B cell (primary cell): ENCODE measurements at regions of chr3 and their contacts with region 1.

Region 1: DNA sequence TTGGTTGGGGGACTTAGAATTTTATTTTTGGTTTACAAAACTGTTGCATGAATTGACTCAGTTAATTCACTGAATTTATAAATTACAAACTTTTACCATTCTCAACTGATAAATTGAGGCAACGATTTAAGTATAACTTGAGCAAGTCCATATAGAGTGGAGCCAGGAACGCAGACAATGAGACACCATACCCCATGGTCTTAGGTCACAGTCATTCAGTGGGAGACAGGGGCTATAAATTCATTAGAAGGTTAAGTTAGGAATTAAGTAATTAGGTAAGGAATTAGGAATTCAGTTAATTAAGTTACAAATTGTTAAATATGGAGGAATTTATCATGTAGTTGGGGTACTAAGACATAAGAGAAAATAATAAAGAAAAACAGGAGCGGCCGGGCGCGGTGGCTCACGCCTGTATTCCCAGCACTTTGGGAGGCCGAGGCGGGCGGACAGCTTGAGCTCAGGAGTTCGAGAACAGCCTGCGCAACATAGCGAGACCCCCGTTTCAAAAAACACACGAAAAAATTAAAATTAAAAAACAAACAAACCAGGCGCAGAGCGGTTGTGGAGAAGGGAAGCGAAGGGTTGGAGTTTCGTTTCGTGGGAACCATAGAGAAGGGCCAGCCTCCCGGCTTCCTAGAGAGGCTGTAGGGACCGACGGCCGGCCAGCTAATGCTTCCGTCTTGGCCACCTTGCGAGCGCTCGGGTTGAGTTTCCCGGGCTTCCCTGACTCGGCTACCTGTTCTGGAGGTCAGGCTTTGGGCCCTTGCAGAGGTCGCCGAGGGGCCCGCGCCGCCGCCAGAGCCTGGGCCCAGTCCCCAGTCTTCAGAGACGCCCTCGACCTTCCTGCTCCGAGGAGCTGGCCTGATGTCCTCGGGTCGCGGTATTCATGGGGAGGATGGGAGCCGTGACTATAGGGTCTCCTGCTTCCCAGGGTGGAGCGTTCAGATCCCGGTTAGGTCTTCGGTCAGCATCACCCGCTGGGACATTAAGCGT is at the start of gene ZNF619:
- DNase-seq: peak; percentile 84
- ATAC-seq: peak; percentile 93
- H3K4me3 ChIP-seq: peak within 1 kb of the TSS; percentile 64 to 92 (median 82)
- H3K4me3 Mint-ChIP-seq: peak within 1 kb of the TSS; percentile 91
- H3K27ac ChIP-seq: peak within 1 kb of the TSS; percentile 72 to 90
- H3K27ac Mint-ChIP-seq: peak within 1 kb of the TSS; percentile 92
- H3K4me1 ChIP-seq: peaks cover 13 to 19% of the 10 kb centered on the region in 2 donors
- H3K4me1 Mint-ChIP-seq: peaks cover 25% of the 10 kb centered on the region
- H3K27me3 ChIP-seq: no peaks in the 10 kb centered on the region
- H3K27me3 Mint-ChIP-seq: no peaks in the 10 kb centered on the region
- CTCF ChIP-seq: no peak
- total RNA-seq, gene ZNF619: 22.8 and 27.6 TPM in 2 replicates

Region 2: GRCh38 chr3:40321818-40322217 is 155.0 kb before region 1 on chr3:
- CTCF ChIA-PET with region 1: no interaction called
- POLR2A ChIA-PET with region 1: no interaction called
- intact Hi-C with region 1: no loop called
- DNase-seq: no peak
- ATAC-seq: no peak
- H3K4me3 ChIP-seq: no peak overlapping the region
- H3K4me3 Mint-ChIP-seq: no peak overlapping the region
- H3K27ac ChIP-seq: no peak overlapping the region
- H3K27ac Mint-ChIP-seq: no peak overlapping the region
- H3K4me1 ChIP-seq: no peaks in the 10 kb centered on the region
- H3K4me1 Mint-ChIP-seq: no peaks in the 10 kb centered on the region
- H3K27me3 ChIP-seq: no peaks in the 10 kb centered on the region
- H3K27me3 Mint-ChIP-seq: peaks cover 12% of the 10 kb centered on the region
- CTCF ChIP-seq: no peak

Region 3: DNA sequence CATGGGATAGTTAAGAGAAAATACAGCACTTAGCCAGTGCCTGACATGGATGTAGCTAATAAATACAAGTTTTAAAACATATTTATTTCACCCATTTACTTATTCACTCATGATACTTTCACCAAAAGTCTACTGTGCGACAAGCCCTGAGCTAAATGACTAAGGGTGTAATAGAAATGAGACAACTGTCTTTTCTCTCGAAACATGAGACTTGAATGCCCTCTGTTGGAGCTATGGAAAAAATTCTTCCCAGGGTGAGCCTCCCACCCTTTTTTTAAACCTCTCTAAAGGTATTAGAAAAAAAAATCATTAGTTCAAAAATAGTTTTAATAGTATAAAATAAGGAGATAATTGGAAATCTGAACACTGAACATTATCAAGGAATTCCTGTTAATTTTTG is 44.0 kb before region 1 on chr3:
- CTCF ChIA-PET with region 1: no interaction called
- POLR2A ChIA-PET with region 1: no interaction called
- intact Hi-C with region 1: no loop called
- DNase-seq: no peak
- ATAC-seq: no peak
- H3K4me3 ChIP-seq: no peak overlapping the region
- H3K4me3 Mint-ChIP-seq: no peak overlapping the region
- H3K27ac ChIP-seq: no peak overlapping the region
- H3K27ac Mint-ChIP-seq: no peak overlapping the region
- H3K4me1 ChIP-seq: no peaks in the 10 kb centered on the region
- H3K4me1 Mint-ChIP-seq: no peaks in the 10 kb centered on the region
- H3K27me3 ChIP-seq: no peaks in the 10 kb centered on the region
- H3K27me3 Mint-ChIP-seq: no peaks in the 10 kb centered on the region
- CTCF ChIP-seq: no peak

Region 4: DNA sequence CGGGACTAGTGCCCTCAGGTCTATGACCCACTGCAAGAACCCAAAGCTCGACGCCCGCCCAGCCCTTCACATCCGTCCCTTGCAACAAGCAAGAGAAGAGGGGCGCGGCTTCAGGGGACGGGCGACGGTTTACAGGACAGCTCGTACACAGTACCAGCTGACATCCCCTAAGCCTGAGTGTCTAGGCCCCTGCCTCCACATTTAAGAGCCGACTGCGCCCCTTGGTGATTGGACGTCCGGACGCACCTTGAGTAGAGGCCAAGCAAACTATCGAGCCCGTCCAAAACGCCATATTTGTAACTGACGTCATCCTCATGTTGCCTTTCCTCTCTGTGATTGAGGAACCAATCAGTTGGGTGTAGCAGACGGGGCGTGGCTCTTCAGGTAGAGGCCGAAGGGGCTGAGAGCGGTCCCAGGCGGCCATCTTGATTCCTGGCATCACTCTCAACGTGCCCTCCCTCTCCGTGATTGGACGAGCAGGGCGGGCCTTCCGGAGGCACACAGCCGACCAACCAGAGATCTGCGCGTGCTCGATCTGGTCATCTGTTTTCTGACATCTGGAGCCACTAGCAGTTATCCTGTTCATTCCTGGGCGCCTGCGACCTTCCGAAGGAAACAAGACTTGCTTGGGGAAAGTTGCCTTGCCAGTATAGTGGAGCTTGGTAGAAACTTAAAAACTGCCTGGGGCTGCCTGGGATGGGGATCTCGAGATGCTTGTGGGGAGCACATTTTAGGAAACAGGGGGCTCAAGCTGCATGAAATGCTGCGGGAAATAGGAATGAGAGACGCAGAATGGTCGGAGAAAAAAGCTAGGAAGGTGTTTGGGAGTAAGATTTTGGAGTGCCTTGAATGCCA is 23.7 kb before region 1 on chr3:
- CTCF ChIA-PET with region 1: interaction called, 6 read pairs
- POLR2A ChIA-PET with region 1: interaction called, 6 read pairs
- intact Hi-C with region 1: loop called (anchors 1 kb)
- DNase-seq: peak; percentile 97
- ATAC-seq: peak; percentile 90
- H3K4me3 ChIP-seq: peak overlapping the region; percentile 60 to 88 (median 77)
- H3K4me3 Mint-ChIP-seq: peak overlapping the region; percentile 96
- H3K27ac ChIP-seq: peak overlapping the region; percentile 92 to 95
- H3K27ac Mint-ChIP-seq: peak overlapping the region; percentile 99
- H3K4me1 ChIP-seq: peaks cover 24 to 28% of the 10 kb centered on the region in 2 donors
- H3K4me1 Mint-ChIP-seq: peaks cover 36% of the 10 kb centered on the region
- H3K27me3 ChIP-seq: no peaks in the 10 kb centered on the region
- H3K27me3 Mint-ChIP-seq: no peaks in the 10 kb centered on the region
- CTCF ChIP-seq: peak; percentile 6

Region 5: DNA sequence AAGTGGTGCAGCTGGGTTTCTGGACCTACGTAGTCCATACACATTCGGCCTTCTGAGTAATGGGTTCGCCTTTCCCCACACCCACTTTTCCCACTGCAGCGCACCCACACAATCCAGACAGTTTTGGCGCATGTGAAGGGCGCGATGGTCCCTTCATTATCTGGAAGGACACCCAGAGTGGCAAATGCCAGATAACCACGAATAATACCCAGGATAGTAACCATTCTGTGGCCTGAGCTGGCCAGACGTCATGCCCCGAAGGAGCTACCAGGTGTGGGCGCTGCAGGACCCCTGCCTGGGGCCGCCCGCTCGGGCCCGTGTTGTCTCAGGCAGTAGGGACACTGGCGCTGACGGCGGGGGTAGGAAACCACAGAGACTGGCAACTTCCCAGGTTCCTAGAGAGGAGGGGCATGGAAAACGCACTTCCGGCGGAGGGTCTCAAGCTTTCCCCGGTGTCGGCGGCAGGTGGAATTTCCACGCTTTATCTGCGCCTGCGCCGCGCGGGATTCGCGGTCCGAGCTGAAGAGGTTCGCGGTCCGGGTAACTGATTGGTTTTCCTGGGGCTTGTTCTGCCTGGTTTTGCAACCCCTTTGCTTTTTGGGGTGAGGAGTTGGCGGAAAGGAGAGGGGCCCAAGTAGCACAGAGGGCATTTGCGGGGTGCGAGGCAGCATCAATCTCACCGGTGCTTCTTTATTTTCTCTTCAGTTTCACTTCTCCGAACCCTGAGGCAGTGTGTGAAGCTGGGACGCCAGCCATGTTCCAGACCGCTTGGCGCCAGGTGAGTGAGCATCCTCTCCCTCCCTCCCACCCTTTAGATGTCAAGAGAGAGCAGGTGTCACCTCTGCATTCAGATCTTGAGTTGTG is 29.1 kb after region 1 on chr3 and contains the start of gene ZNF620:
- CTCF ChIA-PET with region 1: interaction called, 4 read pairs
- POLR2A ChIA-PET with region 1: interaction called, 4 read pairs
- intact Hi-C with region 1: loop called (anchors 2 kb)
- DNase-seq: peak; percentile 62
- ATAC-seq: peak; percentile 80
- H3K4me3 ChIP-seq: peak within 1 kb of the TSS; percentile 60 to 93 (median 76)
- H3K4me3 Mint-ChIP-seq: peak within 1 kb of the TSS; percentile 99
- H3K27ac ChIP-seq: peak within 1 kb of the TSS; percentile 47 to 65
- H3K27ac Mint-ChIP-seq: peak within 1 kb of the TSS; percentile 88
- H3K4me1 ChIP-seq: peaks cover 6 to 10% of the 10 kb centered on the region in 2 donors
- H3K4me1 Mint-ChIP-seq: peaks cover 13% of the 10 kb centered on the region
- H3K27me3 ChIP-seq: no peaks in the 10 kb centered on the region
- H3K27me3 Mint-ChIP-seq: no peaks in the 10 kb centered on the region
- CTCF ChIP-seq: peak; percentile 18
- total RNA-seq, gene ZNF620: 5.3 and 6.6 TPM in 2 replicates

Region 6: GRCh38 chr3:40524568-40525285 is 48.0 kb after region 1 on chr3 and contains the start of gene ZNF621:
- CTCF ChIA-PET with region 1: no interaction called
- POLR2A ChIA-PET with region 1: no interaction called
- intact Hi-C with region 1: loop called (anchors 1 kb)
- DNase-seq: peak; percentile 89
- ATAC-seq: peak; percentile 99
- H3K4me3 ChIP-seq: peak within 1 kb of the TSS; percentile 27 to 94 (median 87)
- H3K4me3 Mint-ChIP-seq: peak within 1 kb of the TSS; percentile 96
- H3K27ac ChIP-seq: peak within 1 kb of the TSS; percentile 86 to 91
- H3K27ac Mint-ChIP-seq: peak within 1 kb of the TSS; percentile 94
- H3K4me1 ChIP-seq: peaks cover 16% of the 10 kb centered on the region in 2 donors
- H3K4me1 Mint-ChIP-seq: peaks cover 24% of the 10 kb centered on the region
- H3K27me3 ChIP-seq: no peaks in the 10 kb centered on the region
- H3K27me3 Mint-ChIP-seq: no peaks in the 10 kb centered on the region
- CTCF ChIP-seq: no peak
- total RNA-seq, gene ZNF621: 34.6 and 35.2 TPM in 2 replicates